Naive thymus-derived CD4-positive, alpha-beta T cell (primary cell): ENCODE measurements at regions of chr5 and their contacts with region 1.

Region 1: GRCh38 chr5:103139264-103139865 is 19.3 kb downstream of the PPIP5K2 start:
- DNase-seq: peak; percentile 59 to 86 (median 78)
- ATAC-seq: peak; percentile 99
- H3K4me3 ChIP-seq: no peak overlapping the region
- H3K4me3 Mint-ChIP-seq: no peak overlapping the region
- H3K27ac ChIP-seq: no peak overlapping the region
- H3K27ac Mint-ChIP-seq: peak overlapping the region in 1 of 9 donors; percentile 51
- H3K4me1 ChIP-seq: no peaks in the 10 kb centered on the region
- H3K4me1 Mint-ChIP-seq: peaks cover 1 to 11% (median 4%) of the 10 kb centered on the region in 7 donors
- H3K27me3 ChIP-seq: no peaks in the 10 kb centered on the region
- H3K27me3 Mint-ChIP-seq: no peaks in the 10 kb centered on the region

Region 2: GRCh38 chr5:102536323-102536928 is 602.9 kb before region 1 on chr5:
- CTCF ChIA-PET with region 1: interaction called, 3 read pairs
- POLR2A ChIA-PET with region 1: no interaction called
- intact Hi-C with region 1: loop called (anchors 1 to 5 kb)
- DNase-seq: peak in 1 of 9 donors; percentile 1
- ATAC-seq: no peak
- H3K4me3 ChIP-seq: no peak overlapping the region
- H3K4me3 Mint-ChIP-seq: no peak overlapping the region
- H3K27ac ChIP-seq: no peak overlapping the region
- H3K27ac Mint-ChIP-seq: no peak overlapping the region
- H3K4me1 ChIP-seq: no peaks in the 10 kb centered on the region
- H3K4me1 Mint-ChIP-seq: no peaks in the 10 kb centered on the region
- H3K27me3 ChIP-seq: no peaks in the 10 kb centered on the region
- H3K27me3 Mint-ChIP-seq: peaks cover 0 to 14% (median 5%) of the 10 kb centered on the region in 5 donors

Region 3: DNA sequence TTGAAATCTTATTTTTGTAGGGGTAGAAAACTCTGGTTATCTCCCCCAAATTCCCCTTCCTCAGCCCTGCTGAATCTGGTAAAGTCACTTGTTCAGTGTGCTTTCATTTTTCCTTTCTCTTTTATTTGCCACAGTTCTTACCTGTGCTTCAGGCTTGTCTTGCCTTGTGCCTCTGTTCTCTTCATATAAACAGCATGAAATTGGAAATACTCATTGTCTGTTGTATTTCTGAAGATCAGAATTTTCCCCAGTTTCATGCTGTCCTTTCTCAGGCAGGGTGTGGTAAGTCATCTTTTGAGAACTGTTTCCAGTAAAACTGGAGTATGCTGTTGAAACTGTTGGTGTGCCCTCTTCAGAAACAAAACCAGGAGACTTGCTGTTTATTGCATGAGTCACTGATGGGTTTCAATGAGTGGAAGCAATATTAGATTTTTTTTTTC is 377.2 kb before region 1 on chr5:
- CTCF ChIA-PET with region 1: no interaction called
- POLR2A ChIA-PET with region 1: no interaction called
- intact Hi-C with region 1: loop called in 1 of 2 experiments (anchors 1 kb)
- DNase-seq: no peak
- ATAC-seq: peak; percentile 32
- H3K4me3 ChIP-seq: peak overlapping the region; percentile 22
- H3K4me3 Mint-ChIP-seq: peak overlapping the region in 6 of 10 donors; percentile 2 to 85 (median 40)
- H3K27ac ChIP-seq: no peak overlapping the region
- H3K27ac Mint-ChIP-seq: peak overlapping the region in 3 of 9 donors; percentile 23 to 87 (median 28)
- H3K4me1 ChIP-seq: peaks cover 5 to 46% of the 10 kb centered on the region in 2 donors
- H3K4me1 Mint-ChIP-seq: peaks cover 24 to 66% (median 48%) of the 10 kb centered on the region in 7 donors
- H3K27me3 ChIP-seq: no peaks in the 10 kb centered on the region
- H3K27me3 Mint-ChIP-seq: no peaks in the 10 kb centered on the region

Region 4: DNA sequence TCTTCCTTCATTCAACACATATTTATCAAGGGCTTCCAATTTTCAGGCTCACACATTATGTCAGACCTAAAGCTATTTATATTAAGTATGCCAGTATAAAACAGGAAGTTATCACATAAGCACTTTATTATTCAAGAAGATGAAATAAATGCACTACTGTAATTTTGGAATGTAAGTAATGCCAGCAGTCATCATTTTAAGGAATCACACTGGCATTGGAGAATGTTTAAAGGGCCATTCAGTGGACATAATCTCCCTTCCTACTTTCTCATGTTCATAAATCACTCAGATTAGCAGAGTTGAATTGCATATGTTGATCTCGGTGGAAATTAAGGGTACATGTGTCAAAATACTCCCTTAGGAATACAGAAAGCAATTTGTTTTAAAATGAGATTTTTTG is 183.9 kb before region 1 on chr5:
- CTCF ChIA-PET with region 1: no interaction called
- POLR2A ChIA-PET with region 1: no interaction called
- intact Hi-C with region 1: no loop called
- DNase-seq: no peak
- ATAC-seq: no peak
- H3K4me3 ChIP-seq: no peak overlapping the region
- H3K4me3 Mint-ChIP-seq: no peak overlapping the region
- H3K27ac ChIP-seq: no peak overlapping the region
- H3K27ac Mint-ChIP-seq: no peak overlapping the region
- H3K4me1 ChIP-seq: no peaks in the 10 kb centered on the region
- H3K4me1 Mint-ChIP-seq: peaks cover 0 to 2% (median 0%) of the 10 kb centered on the region in 7 donors
- H3K27me3 ChIP-seq: no peaks in the 10 kb centered on the region
- H3K27me3 Mint-ChIP-seq: no peaks in the 10 kb centered on the region

Region 5: GRCh38 chr5:103041071-103041676 is 98.2 kb before region 1 on chr5:
- CTCF ChIA-PET with region 1: no interaction called
- POLR2A ChIA-PET with region 1: no interaction called
- intact Hi-C with region 1: loop called (anchors 2 to 5 kb)
- DNase-seq: peak in 5 of 9 donors; percentile 3 to 24 (median 11)
- ATAC-seq: no peak
- H3K4me3 ChIP-seq: no peak overlapping the region
- H3K4me3 Mint-ChIP-seq: no peak overlapping the region
- H3K27ac ChIP-seq: no peak overlapping the region
- H3K27ac Mint-ChIP-seq: no peak overlapping the region
- H3K4me1 ChIP-seq: no peaks in the 10 kb centered on the region
- H3K4me1 Mint-ChIP-seq: no peaks in the 10 kb centered on the region
- H3K27me3 ChIP-seq: no peaks in the 10 kb centered on the region
- H3K27me3 Mint-ChIP-seq: peaks cover 3 to 39% (median 13%) of the 10 kb centered on the region in 5 donors

Region 6: DNA sequence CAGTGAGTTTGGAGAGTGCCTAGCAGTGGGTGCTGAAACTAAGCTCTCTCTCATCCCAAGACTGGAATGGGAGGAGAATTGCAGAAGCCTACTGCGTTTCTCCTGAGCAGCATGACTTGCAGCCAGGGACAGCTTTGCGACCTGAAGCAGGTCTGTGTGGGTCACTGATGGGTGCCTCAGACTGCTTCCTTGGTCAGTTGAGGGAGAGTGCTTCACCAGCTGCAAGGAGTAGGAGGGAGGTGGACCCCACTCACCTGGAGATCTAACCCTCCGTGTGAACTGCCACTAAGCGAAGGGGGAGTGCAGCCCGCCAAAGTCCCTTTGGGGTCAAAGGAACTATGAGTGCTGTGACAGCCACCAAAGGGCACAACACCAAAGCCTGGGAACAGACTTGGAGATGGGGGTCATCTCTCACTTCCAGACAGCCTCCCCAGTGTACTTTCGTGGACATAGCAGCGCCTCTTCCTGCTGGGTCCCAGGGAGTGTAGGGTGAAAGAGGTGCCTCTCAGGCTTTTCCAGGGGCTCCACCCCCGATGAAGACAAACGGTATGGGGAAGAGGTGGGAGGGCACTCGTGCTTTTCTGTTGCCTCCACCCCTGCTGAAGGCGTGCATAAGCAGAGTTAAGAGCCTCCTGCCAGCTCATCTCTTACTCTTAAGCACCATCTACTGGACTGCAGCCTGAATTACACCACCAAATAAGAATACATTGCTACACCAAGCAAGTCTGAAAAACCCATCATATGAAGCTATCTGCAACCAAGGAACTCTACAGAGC is 84.9 kb after region 1 on chr5:
- CTCF ChIA-PET with region 1: no interaction called
- POLR2A ChIA-PET with region 1: no interaction called
- intact Hi-C with region 1: loop called in 1 of 2 experiments (anchors 1 kb)
- DNase-seq: peak in 8 of 9 donors; percentile 10 to 60 (median 38)
- ATAC-seq: peak; percentile 97
- H3K4me3 ChIP-seq: no peak overlapping the region
- H3K4me3 Mint-ChIP-seq: peak overlapping the region in 1 of 10 donors; percentile 21
- H3K27ac ChIP-seq: no peak overlapping the region
- H3K27ac Mint-ChIP-seq: no peak overlapping the region
- H3K4me1 ChIP-seq: no peaks in the 10 kb centered on the region
- H3K4me1 Mint-ChIP-seq: peaks cover 0 to 5% (median 0%) of the 10 kb centered on the region in 7 donors
- H3K27me3 ChIP-seq: peaks cover 0 to 4% of the 10 kb centered on the region in 2 donors
- H3K27me3 Mint-ChIP-seq: peaks cover 11 to 46% (median 27%) of the 10 kb centered on the region in 5 donors